Dorsolateral prefrontal cortex (tissue), 120 donors: ENCODE measurements at regions of chr19 and their contacts with region 1.

Region 1: GRCh38 chr19:2648528-2648937 is 54.0 kb downstream of the GNG7 start:
- DNase-seq: peak; percentile 73 to 91 (median 87)
- H3K4me3 ChIP-seq: no peak overlapping the region
- H3K27ac ChIP-seq: peak overlapping the region in 17 of 59 donors; percentile 2 to 58 (median 31)
- H3K27me3 ChIP-seq: no peaks in the 10 kb centered on the region
- CTCF ChIP-seq: peak; percentile 64 to 99 (median 88)

Region 2: GRCh38 chr19:2613507-2614295 is 34.8 kb before region 1 on chr19:
- intact Hi-C with region 1: no loop called
- DNase-seq: peak in 2 of 10 donors; percentile 41 to 66
- H3K4me3 ChIP-seq: no peak overlapping the region
- H3K27ac ChIP-seq: peak overlapping the region in 7 of 59 donors; percentile 13 to 66 (median 17)
- H3K27me3 ChIP-seq: no peaks in the 10 kb centered on the region
- CTCF ChIP-seq: peak; percentile 44 to 86 (median 77)

Region 3: DNA sequence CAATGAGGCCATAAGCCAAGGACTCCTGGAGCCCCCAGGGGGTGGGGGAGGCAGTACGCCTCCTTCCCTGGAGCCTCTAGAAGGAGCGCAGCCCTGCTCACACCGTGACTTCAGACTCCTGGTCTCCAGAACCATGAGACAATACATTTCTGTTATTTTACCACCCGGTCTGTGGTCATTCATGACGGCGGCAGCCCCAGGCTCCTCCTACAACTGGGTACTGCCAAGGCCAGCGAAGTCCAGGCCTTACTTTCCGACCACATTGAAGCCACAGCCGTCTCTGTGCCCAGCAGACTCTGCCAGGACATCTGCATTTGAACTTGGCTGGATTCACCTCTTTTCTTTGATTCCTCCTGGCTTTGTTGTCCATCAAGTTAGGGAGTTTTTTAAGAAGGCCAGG is 43.4 kb after region 1 on chr19:
- intact Hi-C with region 1: loop called in 1 of 2 experiments (anchors 5 kb)
- DNase-seq: peak in 9 of 10 donors; percentile 77 to 94 (median 88)
- H3K4me3 ChIP-seq: peak overlapping the region in 1 of 59 donors; percentile 5
- H3K27ac ChIP-seq: peak overlapping the region in 58 of 59 donors; percentile 64 to 100 (median 97)
- H3K27me3 ChIP-seq: no peaks in the 10 kb centered on the region
- CTCF ChIP-seq: peak in 6 of 56 donors; percentile 12 to 32 (median 24)

Region 4: DNA sequence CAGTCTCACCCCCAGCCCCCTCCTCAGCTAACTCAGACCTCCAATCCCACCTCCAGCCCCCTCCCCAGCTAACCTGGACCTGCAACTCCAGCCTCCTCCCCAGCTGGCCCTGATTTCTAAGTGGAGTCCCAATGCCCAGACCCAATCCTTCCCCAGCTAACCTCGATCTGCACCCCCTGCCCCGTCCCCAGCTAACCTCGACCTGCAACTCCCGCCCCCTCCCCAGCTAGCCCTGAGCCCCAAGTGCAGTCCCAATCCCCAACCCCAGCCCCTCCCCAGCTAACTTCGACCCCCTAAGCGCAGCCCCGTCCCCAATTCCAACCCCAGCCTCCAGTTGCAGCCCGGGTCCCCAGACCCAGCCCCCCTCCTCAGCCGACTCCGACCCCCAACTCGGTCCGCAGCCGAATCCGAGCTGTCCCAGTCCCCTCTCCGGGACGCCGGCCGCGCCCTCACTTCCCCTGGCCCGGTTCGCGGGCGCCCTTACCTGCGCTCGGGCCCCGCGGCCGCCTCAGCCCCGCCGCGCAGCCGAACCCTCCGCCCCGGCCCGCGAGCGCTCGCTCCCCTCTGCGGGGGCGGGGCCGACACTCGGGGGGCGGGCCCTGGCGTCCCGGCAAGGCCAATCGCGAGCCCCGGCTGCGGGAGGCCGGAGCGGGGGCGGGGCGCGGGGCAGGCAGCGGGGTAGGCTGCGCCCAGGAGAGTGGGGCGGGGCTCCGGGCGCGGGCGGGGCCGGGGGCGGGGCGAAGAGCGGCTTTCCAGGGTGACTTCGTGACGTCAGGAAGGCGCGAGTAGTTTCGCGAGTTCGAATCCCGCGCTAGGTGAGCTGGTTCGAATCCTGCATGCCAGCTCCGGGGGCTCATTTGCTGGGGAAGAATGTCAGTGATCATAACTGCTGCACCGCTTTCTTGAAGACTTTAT is 53.9 kb after region 1 on chr19 and contains the start of gene GNG7:
- intact Hi-C with region 1: loop called in 1 of 2 experiments (anchors 5 kb)
- DNase-seq: peak; percentile 86 to 99 (median 94)
- H3K4me3 ChIP-seq: peak within 1 kb of the TSS; percentile 15 to 76 (median 63)
- H3K27ac ChIP-seq: peak within 1 kb of the TSS in 45 of 59 donors; percentile 18 to 99 (median 70)
- H3K27me3 ChIP-seq: no peaks in the 10 kb centered on the region
- CTCF ChIP-seq: peak in 3 of 56 donors; percentile 7 to 23 (median 19)
- total RNA-seq, gene GNG7: 71.9 to 184 (median 98.1) TPM

Region 5: DNA sequence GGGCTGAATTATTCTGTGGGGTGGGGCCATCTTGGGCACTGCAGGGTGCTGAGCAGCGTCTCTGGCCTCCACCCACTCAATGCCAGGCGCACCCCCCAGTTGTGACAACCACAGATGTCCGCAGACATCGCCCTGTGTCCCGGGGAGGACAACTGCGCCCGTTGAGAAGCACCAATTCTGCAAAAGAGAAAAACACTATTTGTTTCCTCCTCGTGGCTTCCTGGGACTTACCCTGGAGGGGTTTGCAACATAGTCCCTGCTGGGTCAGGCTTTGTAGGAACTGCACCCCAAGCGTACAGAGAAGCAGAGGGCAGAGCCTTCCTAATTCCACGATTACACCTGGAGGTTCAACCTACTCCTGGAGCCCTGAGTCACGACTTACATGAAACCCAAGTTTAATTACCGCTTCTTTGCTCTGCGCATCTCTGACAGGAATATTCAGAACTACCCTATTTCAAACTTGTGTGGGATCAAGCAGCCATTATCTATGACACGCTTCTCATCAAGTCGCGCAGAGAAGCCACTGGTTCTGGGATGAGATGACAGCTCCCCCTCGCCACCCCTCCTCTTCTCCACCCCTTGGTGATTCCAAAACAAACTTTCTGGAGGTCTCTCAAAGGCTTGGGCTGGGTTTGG is 102.4 kb after region 1 on chr19:
- intact Hi-C with region 1: loop called (anchors 1 to 2 kb)
- DNase-seq: no peak
- H3K4me3 ChIP-seq: no peak overlapping the region
- H3K27ac ChIP-seq: peak overlapping the region in 54 of 59 donors; percentile 7 to 85 (median 66)
- H3K27me3 ChIP-seq: no peaks in the 10 kb centered on the region
- CTCF ChIP-seq: no peak

Region 6: DNA sequence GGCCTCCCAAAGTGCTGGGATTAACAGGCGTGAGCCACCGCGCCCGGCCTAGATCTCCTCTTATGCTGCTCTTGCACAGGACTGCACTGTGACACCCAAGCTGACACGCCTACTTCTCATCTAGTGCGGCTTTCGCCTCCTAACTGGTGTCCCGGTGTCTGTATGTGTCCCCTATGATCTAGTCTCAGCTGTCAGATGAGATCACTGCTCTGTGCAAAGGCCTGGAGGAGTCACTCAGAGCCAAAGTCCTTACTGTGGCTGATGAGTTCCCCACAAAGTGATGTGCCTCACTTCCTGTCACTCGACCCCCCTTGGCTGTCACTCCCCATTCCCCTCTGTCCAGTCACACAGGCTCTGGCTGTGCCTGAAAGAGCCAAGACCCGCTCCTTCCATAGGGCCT is 221.1 kb after region 1 on chr19:
- intact Hi-C with region 1: loop called in 1 of 2 experiments (anchors 5 kb)
- DNase-seq: no peak
- H3K4me3 ChIP-seq: no peak overlapping the region
- H3K27ac ChIP-seq: no peak overlapping the region
- H3K27me3 ChIP-seq: no peaks in the 10 kb centered on the region
- CTCF ChIP-seq: no peak